ENCODE measurements at regions of chr11 and their contacts with region 1.

Region 1: DNA sequence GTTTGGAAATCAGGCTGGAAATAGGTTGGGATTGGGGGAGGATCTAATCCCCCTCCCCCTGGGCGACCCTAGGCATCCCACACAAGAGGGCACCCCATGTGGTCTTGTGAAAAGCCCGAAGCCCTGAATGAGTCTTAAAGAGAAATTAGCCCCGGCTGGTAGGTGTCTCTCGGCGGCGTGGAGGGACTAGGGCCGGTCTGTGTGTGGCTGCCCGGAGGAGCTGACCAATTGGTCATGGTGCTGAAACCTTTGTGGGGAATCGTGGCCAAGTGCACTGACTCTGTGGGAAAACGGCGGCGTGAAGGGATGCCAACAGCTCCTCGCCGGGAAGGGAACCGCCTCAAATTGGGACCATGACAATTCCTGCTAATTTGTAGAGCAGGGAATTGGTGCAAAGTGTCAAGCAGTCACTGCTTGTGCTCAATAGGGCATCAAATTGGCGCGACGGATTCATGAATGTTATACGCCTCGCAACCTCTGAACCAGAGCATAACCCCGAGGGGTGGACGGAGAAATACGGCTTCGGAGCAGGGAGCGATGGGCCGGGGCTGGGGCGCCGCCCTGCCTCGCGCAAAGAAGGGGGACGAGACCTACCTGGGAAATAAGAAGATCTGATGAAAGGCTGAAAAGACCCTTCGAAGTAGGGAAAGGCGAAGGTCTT is 1.5 kb downstream of the DBX1 start:
- DNase-seq: peak; percentile 44
- ATAC-seq: no peak
- H3K4me3 Mint-ChIP-seq: no peak overlapping the region
- H3K27ac Mint-ChIP-seq: no peak overlapping the region
- H3K4me1 Mint-ChIP-seq: peaks cover 32% of the 10 kb centered on the region
- H3K27me3 Mint-ChIP-seq: peaks cover 69% of the 10 kb centered on the region

Region 2: GRCh38 chr11:20207781-20208621 is 49.3 kb after region 1 on chr11:
- CTCF ChIA-PET with region 1: no interaction called
- POLR2A ChIA-PET with region 1: no interaction called
- intact Hi-C with region 1: loop called in 1 of 2 experiments (anchors 5 kb)
- DNase-seq: no peak
- ATAC-seq: no peak
- H3K4me3 Mint-ChIP-seq: no peak overlapping the region
- H3K27ac Mint-ChIP-seq: no peak overlapping the region
- H3K4me1 Mint-ChIP-seq: peaks cover 3% of the 10 kb centered on the region
- H3K27me3 Mint-ChIP-seq: peaks cover 41% of the 10 kb centered on the region

Region 3: GRCh38 chr11:20599221-20600019 is 440.7 kb after region 1 on chr11 and contains the start of gene SLC6A5:
- CTCF ChIA-PET with region 1: no interaction called
- POLR2A ChIA-PET with region 1: no interaction called
- intact Hi-C with region 1: loop called (anchors 2 kb)
- DNase-seq: peak; percentile 72
- ATAC-seq: no peak
- H3K4me3 Mint-ChIP-seq: no peak within 1 kb of the TSS
- H3K27ac Mint-ChIP-seq: no peak within 1 kb of the TSS
- H3K4me1 Mint-ChIP-seq: peaks cover 7% of the 10 kb centered on the region
- H3K27me3 Mint-ChIP-seq: peaks cover 86% of the 10 kb centered on the region
- total RNA-seq, gene SLC6A5: not detected

Region 4: DNA sequence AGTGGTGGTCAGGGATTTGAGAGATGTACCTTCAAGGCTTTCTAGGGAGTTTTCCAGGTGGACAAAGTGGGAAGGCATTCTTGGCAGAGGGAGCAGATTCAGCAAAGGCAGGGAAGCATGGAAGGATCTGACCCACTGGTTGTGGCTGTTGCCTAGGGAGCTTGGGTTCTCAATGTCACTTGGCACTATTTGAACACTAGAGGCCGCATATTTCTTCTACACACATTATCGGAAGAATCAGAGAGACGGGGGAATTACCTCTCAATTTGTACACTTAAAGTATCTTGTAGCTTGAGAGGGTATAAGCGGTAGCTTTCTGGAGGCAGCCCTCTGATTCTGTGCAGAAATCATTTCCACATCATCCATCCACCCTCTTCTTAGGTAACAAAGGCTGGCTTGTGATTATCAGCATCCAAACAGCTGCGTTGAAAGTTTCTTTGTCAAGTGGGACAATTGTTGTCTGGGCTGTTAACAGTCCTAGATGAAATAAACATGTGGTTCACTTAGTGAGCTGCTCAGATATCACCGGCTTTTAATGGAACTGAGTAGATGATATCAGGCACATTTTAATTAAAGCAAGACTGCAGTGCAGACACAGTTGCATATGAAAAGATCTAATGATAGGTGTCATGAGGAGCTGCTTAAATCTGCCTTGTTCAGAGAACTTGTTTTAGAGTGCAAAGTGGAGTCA is 513.3 kb after region 1 on chr11:
- CTCF ChIA-PET with region 1: no interaction called
- POLR2A ChIA-PET with region 1: no interaction called
- intact Hi-C with region 1: loop called in 1 of 2 experiments (anchors 5 kb)
- DNase-seq: no peak
- ATAC-seq: no peak
- H3K4me3 Mint-ChIP-seq: no peak overlapping the region
- H3K27ac Mint-ChIP-seq: no peak overlapping the region
- H3K4me1 Mint-ChIP-seq: peaks cover 5% of the 10 kb centered on the region
- H3K27me3 Mint-ChIP-seq: peaks cover 44% of the 10 kb centered on the region